ENCODE measurements at regions of chr15 and their contacts with region 1.

Region 1: DNA sequence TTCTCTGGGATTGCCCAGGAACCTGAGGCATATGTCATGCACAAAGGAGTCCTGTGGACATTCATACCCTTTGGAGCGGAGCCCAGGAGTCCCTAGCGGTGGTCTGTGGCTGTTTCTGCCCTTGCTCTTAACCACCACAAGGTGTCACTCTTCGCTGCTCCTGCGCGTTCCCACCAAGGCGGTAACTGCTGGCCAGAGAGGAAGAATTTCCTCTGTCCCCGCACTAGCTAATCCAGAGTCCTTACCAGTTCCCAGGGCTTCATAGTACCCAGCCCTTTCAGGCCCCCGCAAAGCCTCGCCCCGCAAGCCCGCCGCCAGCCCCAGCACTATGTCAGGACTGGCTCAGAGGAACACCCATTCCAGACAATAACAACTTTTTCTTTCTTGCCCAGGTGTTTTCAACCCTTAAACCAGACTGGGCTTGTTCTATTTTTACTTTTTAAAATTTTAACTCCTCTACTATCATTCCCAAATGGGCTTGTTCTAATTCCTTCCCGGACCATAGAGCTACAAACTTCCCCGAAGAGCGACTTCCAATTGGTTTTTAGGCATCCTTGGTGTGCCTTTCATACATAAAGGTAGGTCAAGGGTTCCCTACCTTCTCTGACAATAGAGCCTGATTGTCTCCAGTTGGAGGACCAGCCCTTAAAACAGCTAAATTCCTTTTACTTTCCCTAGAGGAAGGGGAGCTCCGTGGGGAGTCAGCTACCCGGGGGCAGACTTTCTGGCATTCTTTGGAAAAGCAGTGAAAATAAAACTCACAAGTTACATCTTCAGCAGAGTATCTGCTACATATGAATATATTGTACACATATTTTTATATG is 31.8 kb upstream of the ZNF774 start:
- DNase-seq: peak; percentile 79
- H3K4me3 Mint-ChIP-seq: no peak overlapping the region
- H3K27ac Mint-ChIP-seq: no peak overlapping the region
- H3K4me1 Mint-ChIP-seq: peaks cover 3% of the 10 kb centered on the region
- H3K27me3 Mint-ChIP-seq: no peaks in the 10 kb centered on the region

Region 2: DNA sequence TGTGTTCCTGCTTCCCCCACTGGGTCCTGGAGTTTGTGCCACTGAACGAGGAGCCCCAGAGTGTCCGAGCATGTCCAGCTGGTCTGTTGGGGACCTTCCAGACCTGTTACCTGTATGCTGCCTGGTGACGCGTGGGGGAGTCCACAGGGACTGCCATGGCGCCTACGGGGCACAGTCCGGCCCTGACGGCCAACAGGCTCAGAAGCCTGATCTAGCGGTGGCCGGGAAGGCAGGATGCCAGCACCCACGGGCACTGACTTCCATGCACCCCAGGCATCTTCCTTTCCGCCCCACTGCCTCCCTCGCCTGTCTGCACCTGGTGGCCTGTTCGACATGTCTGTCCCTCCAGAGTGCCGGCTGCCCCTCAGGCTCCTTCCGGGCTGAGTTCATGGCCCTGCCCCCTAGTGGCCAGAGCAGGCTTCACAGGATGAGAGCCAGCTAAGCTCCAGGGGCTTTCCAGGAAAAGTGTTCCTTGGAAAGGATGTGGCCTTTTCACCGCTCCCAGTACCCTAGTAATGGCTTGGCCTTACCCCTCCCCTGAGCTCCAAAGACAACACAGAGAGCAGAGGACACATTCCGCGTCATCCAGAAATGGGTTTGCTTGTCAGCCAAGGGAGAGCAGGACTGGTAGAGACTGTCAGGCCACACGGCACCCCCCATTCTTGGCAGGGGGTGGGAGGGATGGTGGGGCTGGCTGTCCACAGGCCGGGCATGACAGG is 19.1 kb before region 1 on chr15:
- CTCF ChIA-PET with region 1: interaction called, 72 read pairs
- POLR2A ChIA-PET with region 1: no interaction called
- intact Hi-C with region 1: no loop called
- DNase-seq: peak; percentile 76
- H3K4me3 Mint-ChIP-seq: no peak overlapping the region
- H3K27ac Mint-ChIP-seq: no peak overlapping the region
- H3K4me1 Mint-ChIP-seq: peaks cover 35% of the 10 kb centered on the region
- H3K27me3 Mint-ChIP-seq: no peaks in the 10 kb centered on the region

Region 3: GRCh38 chr15:90362936-90363212 is 42.6 kb after region 1 on chr15:
- CTCF ChIA-PET with region 1: interaction called, 27 read pairs
- POLR2A ChIA-PET with region 1: no interaction called
- intact Hi-C with region 1: no loop called
- DNase-seq: no peak
- H3K4me3 Mint-ChIP-seq: no peak overlapping the region
- H3K27ac Mint-ChIP-seq: peak overlapping the region; percentile 39
- H3K4me1 Mint-ChIP-seq: peaks cover 24% of the 10 kb centered on the region
- H3K27me3 Mint-ChIP-seq: no peaks in the 10 kb centered on the region

Region 4: DNA sequence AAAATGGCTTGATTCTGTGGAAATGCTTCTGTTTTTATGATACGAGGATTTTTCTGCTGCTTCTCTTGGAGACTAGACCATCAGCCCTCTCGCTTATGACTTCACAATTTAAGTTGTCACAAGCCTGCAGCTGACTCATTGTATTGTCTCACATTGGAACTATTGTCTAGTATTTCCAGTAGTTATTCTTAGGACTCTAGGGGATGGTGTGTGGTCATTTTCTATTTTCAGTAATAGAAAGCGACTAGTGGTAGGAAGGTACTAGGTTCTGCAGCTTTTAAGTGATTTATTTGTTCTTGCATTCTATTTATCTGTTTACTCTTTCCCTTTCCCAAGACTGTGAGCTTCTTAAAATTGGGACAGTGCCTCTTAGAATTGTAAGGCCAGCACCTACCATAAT is 143.1 kb after region 1 on chr15:
- CTCF ChIA-PET with region 1: interaction called, 15 read pairs
- POLR2A ChIA-PET with region 1: no interaction called
- intact Hi-C with region 1: no loop called
- DNase-seq: no peak
- H3K4me3 Mint-ChIP-seq: no peak overlapping the region
- H3K27ac Mint-ChIP-seq: no peak overlapping the region
- H3K4me1 Mint-ChIP-seq: peaks cover 26% of the 10 kb centered on the region
- H3K27me3 Mint-ChIP-seq: no peaks in the 10 kb centered on the region

Region 5: DNA sequence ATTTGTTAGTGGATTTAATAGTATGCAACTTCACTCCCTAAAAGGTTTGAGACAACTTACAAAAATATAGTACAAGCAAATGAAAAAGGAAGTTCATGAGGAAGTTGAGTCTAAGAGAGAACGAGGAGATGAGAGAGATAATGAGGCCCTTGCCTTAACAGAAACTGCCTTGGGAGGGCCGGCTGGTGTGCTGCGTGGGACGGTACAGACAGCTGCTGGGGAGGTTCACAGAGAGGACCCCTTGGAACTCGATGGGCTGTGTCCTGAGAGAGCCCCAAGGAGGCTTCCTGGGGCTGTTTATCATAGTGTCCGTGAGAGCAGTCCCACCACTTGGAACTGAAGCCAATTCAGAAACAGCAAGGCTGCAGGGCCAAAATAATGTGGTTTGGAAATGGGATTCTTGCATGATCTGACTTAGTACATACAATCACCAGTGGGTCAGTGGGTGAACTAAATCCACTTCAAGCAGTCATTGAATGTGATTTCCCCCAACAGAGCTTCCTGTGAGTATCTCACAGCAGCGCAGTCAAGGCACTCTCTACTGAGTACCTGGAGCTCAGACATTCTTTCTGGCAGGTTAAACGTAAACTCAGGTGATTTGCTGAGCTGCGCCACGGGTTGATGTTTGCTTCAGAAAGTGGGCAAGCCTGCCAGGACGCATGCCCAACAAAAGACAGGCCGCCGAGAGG is 300.2 kb after region 1 on chr15:
- CTCF ChIA-PET with region 1: interaction called, 16 read pairs
- POLR2A ChIA-PET with region 1: no interaction called
- intact Hi-C with region 1: no loop called
- DNase-seq: peak; percentile 42
- H3K4me3 Mint-ChIP-seq: no peak overlapping the region
- H3K27ac Mint-ChIP-seq: peak overlapping the region; percentile 38
- H3K4me1 Mint-ChIP-seq: peaks cover 34% of the 10 kb centered on the region
- H3K27me3 Mint-ChIP-seq: no peaks in the 10 kb centered on the region